ENCODE measurements at regions of chr12 and their contacts with region 1.

Region 1: GRCh38 chr12:46153268-46153872 is 115.5 kb downstream of the SLC38A1 start:
- DNase-seq: no peak
- H3K4me3 ChIP-seq: peak overlapping the region in 1 of 3 experiments; percentile 17
- H3K27ac ChIP-seq: no peak overlapping the region
- H3K4me1 ChIP-seq: peaks cover 11% of the 10 kb centered on the region
- H3K27me3 ChIP-seq: no peaks in the 10 kb centered on the region
- CTCF ChIP-seq: peak; percentile 67 to 77

Region 2: GRCh38 chr12:46049665-46050064 is 103.7 kb before region 1 on chr12:
- CTCF ChIA-PET with region 1: no interaction called
- dilution Hi-C with region 1: no loop called
- in situ Hi-C with region 1: no loop called
- intact Hi-C with region 1: no loop called
- DNase-seq: no peak
- H3K4me3 ChIP-seq: no peak overlapping the region
- H3K27ac ChIP-seq: no peak overlapping the region
- H3K4me1 ChIP-seq: no peaks in the 10 kb centered on the region
- H3K27me3 ChIP-seq: no peaks in the 10 kb centered on the region
- CTCF ChIP-seq: no peak

Region 3: GRCh38 chr12:46100855-46101484 is 52.4 kb before region 1 on chr12:
- CTCF ChIA-PET with region 1: no interaction called
- dilution Hi-C with region 1: no loop called
- in situ Hi-C with region 1: no loop called
- intact Hi-C with region 1: no loop called
- DNase-seq: peak; percentile 43
- H3K4me3 ChIP-seq: no peak overlapping the region
- H3K27ac ChIP-seq: no peak overlapping the region
- H3K4me1 ChIP-seq: no peaks in the 10 kb centered on the region
- H3K27me3 ChIP-seq: no peaks in the 10 kb centered on the region
- CTCF ChIP-seq: no peak

Region 4: DNA sequence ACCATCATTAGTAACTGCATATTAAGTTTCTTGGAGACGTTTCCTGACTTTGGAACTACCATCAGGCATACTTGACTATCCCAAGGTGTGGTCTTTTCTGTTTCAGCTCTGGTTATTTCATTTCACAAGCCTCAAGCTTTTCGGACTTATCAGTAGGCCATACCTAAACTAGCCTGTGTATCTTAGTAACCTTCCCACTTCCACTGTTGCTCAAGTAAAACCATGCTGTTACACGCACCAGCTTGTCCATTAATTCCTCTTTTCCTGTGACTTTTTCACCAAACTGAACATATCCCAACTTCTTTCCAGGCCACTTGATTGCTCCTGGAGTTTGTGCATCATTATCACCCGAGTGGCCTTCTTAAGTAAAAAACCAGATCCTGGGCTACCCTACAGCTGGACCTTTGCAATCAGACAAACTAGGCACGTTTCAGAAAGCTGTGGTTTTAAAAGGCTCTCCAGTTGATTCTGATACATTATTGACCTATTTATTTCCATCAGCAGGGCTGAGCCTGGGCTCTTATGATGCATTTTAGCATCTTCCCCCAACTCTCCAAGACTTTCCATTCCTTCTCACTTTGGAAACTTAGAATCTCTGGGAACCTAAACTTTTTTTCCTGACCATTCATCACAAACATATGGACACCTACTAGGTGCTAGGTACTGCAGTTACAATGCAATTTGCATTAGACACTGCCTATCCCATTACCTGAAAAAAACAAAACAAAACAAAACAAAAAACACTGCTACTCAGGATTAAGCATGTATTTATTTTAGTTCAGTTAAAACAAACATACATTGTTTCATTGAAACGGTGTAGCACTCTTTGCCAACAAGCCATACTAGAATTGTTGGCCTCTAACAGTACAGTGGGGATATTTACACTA is 204.3 kb after region 1 on chr12:
- CTCF ChIA-PET with region 1: no interaction called
- dilution Hi-C with region 1: no loop called
- in situ Hi-C with region 1: no loop called
- intact Hi-C with region 1: loop called (anchors 1 kb)
- DNase-seq: peak; percentile 87
- H3K4me3 ChIP-seq: no peak overlapping the region
- H3K27ac ChIP-seq: peak overlapping the region; percentile 13
- H3K4me1 ChIP-seq: peaks cover 28% of the 10 kb centered on the region
- H3K27me3 ChIP-seq: no peaks in the 10 kb centered on the region
- CTCF ChIP-seq: no peak

Region 5: DNA sequence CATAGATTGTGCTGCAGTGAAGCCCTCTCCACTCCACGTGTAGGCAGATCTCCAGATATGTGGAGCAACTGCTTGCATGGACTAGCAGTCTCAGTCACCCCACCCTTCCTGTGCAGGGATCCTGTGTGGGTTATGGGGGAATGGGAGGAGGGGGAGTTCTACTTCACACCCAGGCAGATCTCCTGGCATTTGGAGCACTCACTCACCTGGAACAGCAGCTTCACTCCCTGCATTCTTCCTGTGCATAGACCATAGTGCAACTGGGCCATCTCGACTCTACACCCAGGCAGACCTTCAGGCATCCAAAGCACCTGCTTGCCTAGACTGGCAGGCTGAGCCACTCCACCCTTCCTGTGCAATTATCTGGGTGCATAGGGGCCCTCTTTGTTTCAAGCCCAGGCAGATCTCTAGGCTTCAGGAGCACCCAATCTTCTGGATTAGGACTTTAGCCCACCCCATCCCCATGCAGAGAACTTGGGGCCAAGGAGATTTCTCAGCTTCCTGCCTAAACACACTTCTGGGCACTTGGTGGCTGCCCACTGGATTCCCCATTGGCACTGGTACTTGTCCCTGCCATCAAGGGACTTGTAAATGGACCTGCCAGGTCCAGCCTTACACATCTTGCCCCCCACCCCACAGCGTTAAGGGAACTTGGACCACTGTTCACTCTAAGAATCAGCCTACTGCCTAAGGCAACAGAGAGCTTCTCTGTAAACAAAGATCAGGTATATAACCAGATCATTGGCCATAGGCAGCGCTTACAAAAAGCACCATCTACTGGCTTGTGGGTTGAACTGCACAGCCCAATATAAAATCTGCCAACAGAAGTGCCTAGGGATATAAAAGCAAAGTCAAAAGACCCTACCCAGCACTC is 830.3 kb after region 1 on chr12:
- CTCF ChIA-PET with region 1: no interaction called
- dilution Hi-C with region 1: no loop called
- in situ Hi-C with region 1: no loop called
- intact Hi-C with region 1: loop called (anchors 5 kb)
- DNase-seq: peak; percentile 60
- H3K4me3 ChIP-seq: no peak overlapping the region
- H3K27ac ChIP-seq: no peak overlapping the region
- H3K4me1 ChIP-seq: peaks cover 20% of the 10 kb centered on the region
- H3K27me3 ChIP-seq: no peaks in the 10 kb centered on the region
- CTCF ChIP-seq: peak; percentile 85 to 93

Measured in mammary epithelial cell (primary cell).